Activated B cell treated with CpG ODN at 0.5 μM for 24 hours (primary cell): ENCODE measurements at regions of chr9 and their contacts with region 1.

Region 1: DNA sequence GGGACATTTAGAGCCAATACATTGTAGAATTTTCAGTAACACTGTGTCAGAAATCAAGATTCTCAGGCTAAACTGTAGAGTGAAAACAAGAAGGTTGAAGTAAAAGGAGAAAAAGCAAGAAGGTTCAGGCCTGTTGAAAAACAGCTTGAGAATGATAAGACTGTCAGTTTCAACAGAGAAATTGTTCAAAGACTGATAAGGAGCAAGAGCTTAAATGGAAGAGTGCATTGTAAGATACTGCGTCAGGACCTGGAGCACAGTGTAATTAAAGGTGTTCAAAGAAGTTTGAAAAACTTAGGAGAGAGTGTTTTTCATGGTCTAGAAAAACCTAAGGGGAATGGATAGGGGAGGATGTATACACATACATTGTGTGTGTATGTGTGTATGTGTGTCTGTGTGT is 408.3 kb downstream of the KDM4C start:
- DNase-seq: no peak
- ATAC-seq: no peak
- H3K4me3 Mint-ChIP-seq: no peak overlapping the region
- H3K27ac Mint-ChIP-seq: no peak overlapping the region
- H3K4me1 Mint-ChIP-seq: no peaks in the 10 kb centered on the region
- H3K27me3 Mint-ChIP-seq: no peaks in the 10 kb centered on the region
- CTCF ChIP-seq: no peak

Region 2: GRCh38 chr9:7094052-7094451 is 72.0 kb before region 1 on chr9:
- CTCF ChIA-PET with region 1: no interaction called
- POLR2A ChIA-PET with region 1: no interaction called
- intact Hi-C with region 1: loop called (anchors 2 kb)
- DNase-seq: no peak
- ATAC-seq: no peak
- H3K4me3 Mint-ChIP-seq: no peak overlapping the region
- H3K27ac Mint-ChIP-seq: no peak overlapping the region
- H3K4me1 Mint-ChIP-seq: peaks cover 17% of the 10 kb centered on the region
- H3K27me3 Mint-ChIP-seq: no peaks in the 10 kb centered on the region
- CTCF ChIP-seq: no peak

Region 3: DNA sequence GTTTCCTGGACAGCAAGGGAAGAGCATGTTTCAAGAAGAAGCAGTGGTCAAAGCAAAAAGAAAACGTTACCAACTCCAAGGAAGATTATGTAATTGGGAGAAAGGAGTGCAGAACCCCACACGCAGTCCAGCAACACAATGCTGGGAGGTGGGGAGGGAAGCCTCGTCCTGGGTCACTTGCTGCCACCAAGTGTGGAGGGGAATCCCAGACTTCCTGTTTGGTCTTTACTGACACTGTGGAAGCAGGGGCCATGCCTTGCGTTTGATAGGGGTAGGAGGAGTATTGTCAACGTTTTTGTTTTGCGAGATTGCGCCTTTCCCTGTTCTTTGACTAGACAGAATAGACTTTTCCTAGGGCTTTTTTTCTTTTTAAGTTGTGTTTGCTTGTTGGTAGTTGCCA is 12.7 kb after region 1 on chr9:
- CTCF ChIA-PET with region 1: no interaction called
- POLR2A ChIA-PET with region 1: no interaction called
- intact Hi-C with region 1: no loop called
- DNase-seq: no peak
- ATAC-seq: no peak
- H3K4me3 Mint-ChIP-seq: no peak overlapping the region
- H3K27ac Mint-ChIP-seq: peak overlapping the region; percentile 3
- H3K4me1 Mint-ChIP-seq: peaks cover 13% of the 10 kb centered on the region
- H3K27me3 Mint-ChIP-seq: no peaks in the 10 kb centered on the region
- CTCF ChIP-seq: no peak